ENCODE measurements at regions of chr6 and their contacts with region 1.

Region 1: DNA sequence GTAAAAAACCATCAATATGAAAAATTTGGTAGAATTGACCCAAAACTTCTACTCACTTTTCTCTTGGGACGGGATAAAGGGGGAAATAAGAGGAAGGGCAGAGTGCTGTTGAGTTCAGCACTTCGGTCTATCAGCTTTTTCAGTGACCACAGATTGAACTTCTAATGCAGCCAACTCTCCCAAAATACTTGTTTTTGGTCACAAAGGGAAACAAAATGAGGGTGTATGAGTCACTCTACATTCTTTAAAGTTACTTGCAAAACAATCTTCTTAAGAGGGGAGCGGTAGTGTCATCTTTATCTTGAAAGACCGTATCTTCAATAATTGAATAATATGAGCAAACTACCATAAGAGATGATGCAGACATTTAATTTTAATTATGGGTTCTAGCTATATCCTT is 661.3 kb downstream of the CD109 start:
- DNase-seq: no peak
- ATAC-seq: no peak
- H3K4me3 ChIP-seq: no peak overlapping the region
- H3K27ac ChIP-seq: no peak overlapping the region
- H3K4me1 ChIP-seq: no peaks in the 10 kb centered on the region
- H3K27me3 ChIP-seq: no peaks in the 10 kb centered on the region
- CTCF ChIP-seq: no peak
- EP300 ChIP-seq: no peak
- POLR2A ChIP-seq: no peak
- RAD21 ChIP-seq: no peak

Region 2: DNA sequence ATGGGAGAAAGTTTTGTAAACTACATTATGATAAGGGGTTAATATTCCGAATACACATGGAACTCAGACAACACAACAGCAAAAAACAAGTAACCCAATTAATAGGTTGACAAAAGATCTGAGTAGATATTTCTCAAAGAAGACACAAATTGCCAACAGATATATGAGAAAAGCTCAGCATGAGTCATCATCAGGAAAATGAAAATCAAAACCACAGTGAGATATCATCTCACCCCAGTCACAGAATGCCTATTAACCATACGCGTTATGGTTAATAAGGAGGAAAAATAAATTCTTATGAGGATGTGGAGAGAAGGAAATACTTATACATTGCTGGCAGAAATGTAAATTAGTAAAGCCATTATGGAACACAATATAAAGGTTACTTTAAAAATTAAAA is 153.6 kb after region 1 on chr6:
- CTCF ChIA-PET with region 1: no interaction called
- POLR2A ChIA-PET with region 1: no interaction called
- RAD21 ChIA-PET with region 1: no interaction called
- SMC1A ChIA-PET with region 1: no interaction called
- in situ Hi-C with region 1: no loop called
- intact Hi-C with region 1: no loop called
- DNase-seq: no peak
- ATAC-seq: no peak
- H3K4me3 ChIP-seq: no peak overlapping the region
- H3K27ac ChIP-seq: no peak overlapping the region
- H3K4me1 ChIP-seq: no peaks in the 10 kb centered on the region
- H3K27me3 ChIP-seq: no peaks in the 10 kb centered on the region
- CTCF ChIP-seq: no peak
- EP300 ChIP-seq: no peak
- POLR2A ChIP-seq: no peak
- RAD21 ChIP-seq: no peak

Region 3: GRCh38 chr6:74574794-74575193 is 217.5 kb after region 1 on chr6:
- CTCF ChIA-PET with region 1: no interaction called
- POLR2A ChIA-PET with region 1: no interaction called
- RAD21 ChIA-PET with region 1: no interaction called
- SMC1A ChIA-PET with region 1: no interaction called
- in situ Hi-C with region 1: no loop called
- intact Hi-C with region 1: no loop called
- DNase-seq: no peak
- ATAC-seq: peak; percentile 50
- H3K4me3 ChIP-seq: no peak overlapping the region
- H3K27ac ChIP-seq: no peak overlapping the region
- H3K4me1 ChIP-seq: peaks cover 12% of the 10 kb centered on the region
- H3K27me3 ChIP-seq: no peaks in the 10 kb centered on the region
- CTCF ChIP-seq: peak; percentile 41 to 52 (median 47); a peak in 5 of 6 replicates
- EP300 ChIP-seq: no peak
- POLR2A ChIP-seq: no peak
- RAD21 ChIP-seq: peak; percentile 57; the same call in 1 of the 2 replicates

Region 4: GRCh38 chr6:74798302-74798701 is 441.0 kb after region 1 on chr6:
- CTCF ChIA-PET with region 1: no interaction called
- POLR2A ChIA-PET with region 1: interaction called, 10 read pairs
- RAD21 ChIA-PET with region 1: no interaction called
- SMC1A ChIA-PET with region 1: no interaction called
- in situ Hi-C with region 1: no loop called
- intact Hi-C with region 1: no loop called
- DNase-seq: no peak
- ATAC-seq: no peak
- H3K4me3 ChIP-seq: no peak overlapping the region
- H3K27ac ChIP-seq: no peak overlapping the region
- H3K4me1 ChIP-seq: no peaks in the 10 kb centered on the region
- H3K27me3 ChIP-seq: no peaks in the 10 kb centered on the region
- CTCF ChIP-seq: no peak
- EP300 ChIP-seq: no peak
- POLR2A ChIP-seq: no peak
- RAD21 ChIP-seq: no peak

Measured in GM12878 (cell line).